RWPE1 (cell line): ENCODE measurements at regions of chr10 and their contacts with region 1.

Region 1: GRCh38 chr10:86971232-86971991 is 3.1 kb downstream of the ADIRF start:
- DNase-seq: peak; percentile 94
- H3K27ac ChIP-seq: peak overlapping the region; percentile 100
- CTCF ChIP-seq: no peak

Region 2: DNA sequence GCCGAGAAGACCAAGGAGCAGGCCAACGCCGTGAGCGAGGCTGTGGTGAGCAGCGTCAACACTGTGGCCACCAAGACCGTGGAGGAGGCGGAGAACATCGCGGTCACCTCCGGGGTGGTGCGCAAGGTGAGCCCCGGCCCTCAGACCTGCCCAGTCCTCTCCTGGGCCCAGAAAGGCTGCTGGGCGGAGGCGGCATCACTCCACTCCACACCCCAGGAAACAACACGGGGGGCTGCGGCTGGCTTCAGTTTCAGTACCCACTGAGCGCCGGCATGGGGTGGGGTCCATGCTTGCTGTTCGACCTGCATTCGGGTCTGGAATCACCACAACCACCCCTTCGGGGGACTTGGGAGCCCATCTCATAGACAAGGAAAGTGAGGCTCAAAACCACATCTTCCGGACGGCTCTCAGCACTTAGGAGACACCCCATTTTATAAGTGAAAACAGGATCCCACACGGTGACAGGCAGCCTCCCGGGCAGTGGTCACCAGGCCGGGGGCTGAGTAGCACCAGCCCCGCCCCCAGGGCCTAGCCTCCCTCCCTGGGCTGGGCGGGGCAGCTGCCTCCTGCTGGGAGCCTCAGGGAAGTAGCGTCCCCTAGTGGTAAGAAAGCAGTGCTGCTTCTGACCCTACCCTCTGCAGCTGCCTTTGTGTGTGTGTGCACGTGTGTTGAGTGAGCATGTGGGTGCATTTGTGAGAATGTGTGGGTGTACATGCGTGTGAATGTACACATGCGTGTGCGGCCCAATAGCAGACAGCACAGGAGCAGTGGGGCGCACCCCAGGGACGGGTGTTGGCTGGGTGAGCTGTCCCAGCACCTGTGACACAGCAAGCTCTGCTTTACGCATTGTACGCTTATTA is 11.2 kb before region 1 on chr10:
- CTCF ChIA-PET with region 1: interaction called, 21 read pairs
- POLR2A ChIA-PET with region 1: interaction called, 18 read pairs
- DNase-seq: peak; percentile 68
- H3K27ac ChIP-seq: peak overlapping the region; percentile 83
- CTCF ChIP-seq: peak; percentile 67; the same call in 1 of the 2 replicates

Region 3: GRCh38 chr10:87038786-87039185 is 67.4 kb after region 1 on chr10:
- CTCF ChIA-PET with region 1: interaction called, 6 read pairs
- POLR2A ChIA-PET with region 1: interaction called, 11 read pairs
- DNase-seq: peak; percentile 72
- H3K27ac ChIP-seq: peak overlapping the region; percentile 48
- CTCF ChIP-seq: no peak

Region 4: GRCh38 chr10:88687853-88688467 is 1716.5 kb after region 1 on chr10:
- CTCF ChIA-PET with region 1: no interaction called
- POLR2A ChIA-PET with region 1: no interaction called
- DNase-seq: peak; percentile 58
- H3K27ac ChIP-seq: no peak overlapping the region
- CTCF ChIP-seq: peak; percentile 85